Naive thymus-derived CD8-positive, alpha-beta T cell (primary cell): ENCODE measurements at regions of chr3 and their contacts with region 1.

Region 1: GRCh38 chr3:43162230-43163084 is 56.6 kb upstream of the POMGNT2 start:
- DNase-seq: peak; percentile 22 to 82 (median 63)
- ATAC-seq: peak; percentile 91 to 95
- H3K4me3 Mint-ChIP-seq: peak overlapping the region; percentile 69 to 93 (median 88)
- H3K27ac Mint-ChIP-seq: peak overlapping the region; percentile 96 to 100 (median 99)
- H3K4me1 Mint-ChIP-seq: peaks cover 14 to 40% (median 25%) of the 10 kb centered on the region in 4 donors
- H3K27me3 Mint-ChIP-seq: no peaks in the 10 kb centered on the region

Region 2: GRCh38 chr3:43180027-43180426 is 17.6 kb after region 1 on chr3:
- POLR2A ChIA-PET with region 1: interaction called, 54 read pairs
- DNase-seq: peak in 6 of 10 donors; percentile 25 to 67 (median 52)
- ATAC-seq: peak; percentile 94 to 97
- H3K4me3 Mint-ChIP-seq: peak overlapping the region; percentile 57 to 91 (median 78)
- H3K27ac Mint-ChIP-seq: peak overlapping the region; percentile 80 to 97 (median 93)
- H3K4me1 Mint-ChIP-seq: peaks cover 41 to 82% (median 69%) of the 10 kb centered on the region in 4 donors
- H3K27me3 Mint-ChIP-seq: no peaks in the 10 kb centered on the region

Region 3: GRCh38 chr3:43215663-43216275 is 53.3 kb after region 1 on chr3:
- POLR2A ChIA-PET with region 1: interaction called, 30 read pairs
- DNase-seq: peak in 1 of 10 donors; percentile 29
- ATAC-seq: peak; percentile 62 to 71
- H3K4me3 Mint-ChIP-seq: peak overlapping the region in 9 of 10 donors; percentile 11 to 83 (median 63)
- H3K27ac Mint-ChIP-seq: peak overlapping the region; percentile 88 to 95 (median 90)
- H3K4me1 Mint-ChIP-seq: peaks cover 37 to 62% (median 58%) of the 10 kb centered on the region in 4 donors
- H3K27me3 Mint-ChIP-seq: no peaks in the 10 kb centered on the region

Region 4: GRCh38 chr3:43286115-43286840 is 123.8 kb after region 1 on chr3 and contains the start of gene SNRK:
- POLR2A ChIA-PET with region 1: interaction called, 24 read pairs
- DNase-seq: peak; percentile 81 to 98 (median 94)
- ATAC-seq: peak; percentile 69 to 81
- H3K4me3 Mint-ChIP-seq: peak within 1 kb of the TSS; percentile 94 to 100 (median 99)
- H3K27ac Mint-ChIP-seq: peak within 1 kb of the TSS; percentile 96 to 100 (median 100)
- H3K4me1 Mint-ChIP-seq: peaks cover 30 to 42% (median 35%) of the 10 kb centered on the region in 4 donors
- H3K27me3 Mint-ChIP-seq: peaks cover 0 to 2% (median 0%) of the 10 kb centered on the region in 5 donors
- polyA plus RNA-seq, gene SNRK: 71.1 to 97.5 (median 90.6) TPM

Region 5: GRCh38 chr3:43378066-43378935 is 215.8 kb after region 1 on chr3:
- POLR2A ChIA-PET with region 1: interaction called, 12 read pairs
- DNase-seq: peak; percentile 48 to 86 (median 72)
- ATAC-seq: peak; percentile 97 to 98
- H3K4me3 Mint-ChIP-seq: peak overlapping the region in 3 of 10 donors; percentile 24 to 29 (median 26)
- H3K27ac Mint-ChIP-seq: peak overlapping the region; percentile 70 to 91 (median 82)
- H3K4me1 Mint-ChIP-seq: peaks cover 18 to 37% (median 25%) of the 10 kb centered on the region in 4 donors
- H3K27me3 Mint-ChIP-seq: no peaks in the 10 kb centered on the region